GM12878 (cell line): ENCODE measurements at regions of chr2 and their contacts with region 1.

Region 1: GRCh38 chr2:21175895-21176646 is 52.3 kb downstream of the TDRD15 start:
- DNase-seq: no peak
- ATAC-seq: no peak
- H3K4me3 ChIP-seq: no peak overlapping the region
- H3K27ac ChIP-seq: no peak overlapping the region
- H3K4me1 ChIP-seq: no peaks in the 10 kb centered on the region
- H3K27me3 ChIP-seq: no peaks in the 10 kb centered on the region
- CTCF ChIP-seq: peak in 1 of 3 experiments; percentile 12; a peak in 1 of 6 replicates
- EP300 ChIP-seq: no peak
- POLR2A ChIP-seq: no peak
- RAD21 ChIP-seq: 0 out of 2 replicates have a peak, but pooled peaks have one; percentile 16

Region 2: GRCh38 chr2:21317131-21317530 is 141.1 kb after region 1 on chr2:
- CTCF ChIA-PET with region 1: interaction called, 11 read pairs
- POLR2A ChIA-PET with region 1: no interaction called
- RAD21 ChIA-PET with region 1: interaction called, 5 read pairs
- SMC1A ChIA-PET with region 1: interaction called, 4 read pairs
- in situ Hi-C with region 1: no loop called
- intact Hi-C with region 1: loop called (anchors 2 kb)
- DNase-seq: no peak
- ATAC-seq: peak; percentile 86
- H3K4me3 ChIP-seq: no peak overlapping the region
- H3K27ac ChIP-seq: no peak overlapping the region
- H3K4me1 ChIP-seq: no peaks in the 10 kb centered on the region
- H3K27me3 ChIP-seq: no peaks in the 10 kb centered on the region; a peak in 1 of 4 replicates
- CTCF ChIP-seq: peak; percentile 56 to 61 (median 58)
- EP300 ChIP-seq: no peak
- POLR2A ChIP-seq: no peak
- RAD21 ChIP-seq: peak; percentile 48; the same call in 1 of the 2 replicates

Region 3: DNA sequence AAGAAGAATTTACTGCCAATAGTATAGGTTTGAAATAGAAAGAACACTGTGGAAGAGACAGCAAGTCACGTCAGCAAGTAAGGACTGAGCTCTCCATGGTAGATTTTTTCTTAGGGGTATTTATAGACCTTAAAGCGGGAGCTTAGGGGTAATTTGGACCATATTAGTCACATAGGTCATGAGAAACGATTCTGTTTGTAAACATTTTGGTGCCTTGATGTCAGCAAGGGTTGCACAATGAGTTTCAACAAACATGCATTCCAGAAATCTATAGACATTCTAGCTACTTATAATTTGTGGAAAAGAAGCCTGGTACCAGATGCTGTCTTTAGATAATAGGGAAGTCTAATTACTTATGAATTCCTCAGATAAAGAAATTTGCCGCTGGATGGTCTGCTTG is 572.4 kb after region 1 on chr2:
- CTCF ChIA-PET with region 1: no interaction called
- POLR2A ChIA-PET with region 1: no interaction called
- RAD21 ChIA-PET with region 1: no interaction called
- SMC1A ChIA-PET with region 1: no interaction called
- in situ Hi-C with region 1: no loop called
- intact Hi-C with region 1: no loop called
- DNase-seq: no peak
- ATAC-seq: no peak
- H3K4me3 ChIP-seq: no peak overlapping the region
- H3K27ac ChIP-seq: no peak overlapping the region
- H3K4me1 ChIP-seq: no peaks in the 10 kb centered on the region
- H3K27me3 ChIP-seq: no peaks in the 10 kb centered on the region
- CTCF ChIP-seq: no peak
- EP300 ChIP-seq: no peak
- POLR2A ChIP-seq: no peak
- RAD21 ChIP-seq: no peak